ENCODE measurements at regions of chr16 and their contacts with region 1.

Region 1: DNA sequence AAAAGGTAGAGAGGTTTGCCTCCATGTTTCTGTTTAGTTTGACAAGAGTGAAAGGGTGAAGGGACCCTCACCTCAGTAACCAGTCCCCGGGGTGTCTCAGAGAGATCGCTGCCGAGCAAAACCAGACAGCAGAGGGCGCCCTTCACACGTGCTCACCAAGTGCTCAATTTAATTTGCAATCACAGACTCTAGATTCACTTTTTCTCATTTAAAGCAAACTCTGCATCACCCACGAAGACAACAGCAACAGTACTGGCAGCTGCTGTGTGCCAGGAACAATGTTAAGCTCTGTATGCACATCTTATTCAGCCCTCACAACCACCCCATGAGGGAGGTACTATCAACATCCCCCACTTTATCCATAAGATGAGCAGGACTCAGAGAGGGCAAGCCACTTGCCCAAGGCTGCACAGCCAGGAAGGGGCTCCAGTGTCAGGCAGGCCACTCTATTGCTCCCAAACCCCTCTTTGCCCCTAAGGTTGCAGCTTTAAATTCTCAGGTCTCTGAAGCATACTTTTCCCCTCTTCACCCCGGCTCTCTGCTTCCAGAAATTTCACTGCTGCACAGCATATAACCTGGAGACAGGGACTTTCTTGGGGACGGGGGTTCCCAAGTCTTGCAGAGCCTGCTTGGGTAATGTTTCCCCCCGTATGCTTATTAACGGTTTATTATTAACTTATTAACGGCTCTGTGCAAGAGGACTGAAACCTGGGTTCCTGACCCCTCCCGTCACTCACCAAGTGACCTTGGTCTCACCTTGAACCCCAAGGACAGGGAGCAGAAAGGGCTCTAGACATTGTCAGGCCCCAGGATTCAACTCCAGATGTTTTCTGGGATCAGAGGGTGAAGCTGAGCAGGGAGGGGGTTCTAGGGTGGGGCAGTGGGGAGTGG is 70.9 kb downstream of the CNGB1 start:
- DNase-seq: peak; percentile 63 to 77
- H3K4me3 ChIP-seq: no peak overlapping the region
- H3K27ac ChIP-seq: no peak overlapping the region
- H3K4me1 ChIP-seq: peaks cover 31% of the 10 kb centered on the region
- H3K27me3 ChIP-seq: no peaks in the 10 kb centered on the region
- CTCF ChIP-seq: peak; percentile 93

Region 2: DNA sequence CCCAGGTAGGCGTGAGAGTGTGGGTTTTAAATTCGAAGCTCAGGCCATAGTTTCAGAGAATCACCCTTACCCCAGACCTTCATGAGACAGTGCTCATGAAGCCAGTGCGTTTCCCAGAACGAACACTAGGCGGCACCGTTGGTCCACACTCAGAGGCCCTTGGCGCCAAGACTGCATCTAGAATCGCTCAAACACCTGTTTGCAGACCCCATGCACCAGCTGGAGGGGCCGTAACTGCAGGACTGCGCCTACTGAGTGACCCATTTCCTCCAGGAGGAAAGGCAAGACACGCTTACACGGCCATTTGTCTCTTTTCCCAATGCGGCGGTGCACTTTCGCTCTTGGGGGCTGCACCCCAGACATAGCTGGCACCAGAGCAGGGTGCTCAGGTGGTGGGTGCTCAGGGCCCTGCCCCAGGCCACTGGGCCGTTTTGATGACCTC is 323.6 kb before region 1 on chr16:
- CTCF ChIA-PET with region 1: no interaction called
- POLR2A ChIA-PET with region 1: no interaction called
- intact Hi-C with region 1: loop called (anchors 5 kb)
- DNase-seq: peak; percentile 52 to 69
- H3K4me3 ChIP-seq: no peak overlapping the region
- H3K27ac ChIP-seq: no peak overlapping the region
- H3K4me1 ChIP-seq: no peaks in the 10 kb centered on the region
- H3K27me3 ChIP-seq: no peaks in the 10 kb centered on the region
- CTCF ChIP-seq: peak; percentile 95

Region 3: GRCh38 chr16:57591086-57591869 is 308.7 kb before region 1 on chr16:
- CTCF ChIA-PET with region 1: no interaction called
- POLR2A ChIA-PET with region 1: no interaction called
- intact Hi-C with region 1: loop called (anchors 5 kb)
- DNase-seq: peak; percentile 79
- H3K4me3 ChIP-seq: no peak overlapping the region; the same call in 1 of the 2 replicates
- H3K27ac ChIP-seq: peak overlapping the region; percentile 80
- H3K4me1 ChIP-seq: peaks cover 16% of the 10 kb centered on the region
- H3K27me3 ChIP-seq: no peaks in the 10 kb centered on the region
- CTCF ChIP-seq: peak; percentile 97

Region 4: DNA sequence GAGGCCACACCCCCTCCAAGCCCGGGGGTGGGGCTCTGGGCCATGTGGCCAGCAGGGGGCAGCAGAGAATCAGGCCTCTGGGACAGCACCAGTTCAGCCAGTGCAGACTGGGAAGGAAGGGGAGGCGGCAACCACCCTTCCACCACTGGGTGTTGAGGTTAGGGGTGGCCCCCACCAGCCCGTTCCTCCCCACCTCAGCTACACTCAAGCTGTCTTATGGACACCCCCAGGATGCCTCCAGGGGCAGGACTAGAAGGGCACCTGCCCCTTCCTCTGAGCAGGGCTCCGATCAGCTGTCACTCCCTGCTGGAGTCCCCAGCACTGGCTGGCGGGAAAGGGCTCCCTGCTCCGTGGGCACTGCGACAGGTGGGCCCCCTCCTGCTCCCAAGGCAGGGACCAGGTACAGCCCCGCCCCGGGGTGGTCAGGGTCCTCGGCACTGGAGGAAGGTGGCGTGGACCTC is 142.7 kb before region 1 on chr16:
- CTCF ChIA-PET with region 1: no interaction called
- POLR2A ChIA-PET with region 1: no interaction called
- intact Hi-C with region 1: loop called (anchors 1 kb)
- DNase-seq: peak; percentile 59 to 91
- H3K4me3 ChIP-seq: no peak overlapping the region
- H3K27ac ChIP-seq: no peak overlapping the region
- H3K4me1 ChIP-seq: peaks cover 21% of the 10 kb centered on the region
- H3K27me3 ChIP-seq: no peaks in the 10 kb centered on the region
- CTCF ChIP-seq: peak; percentile 96

Region 5: GRCh38 chr16:57846078-57846697 is 53.8 kb before region 1 on chr16:
- CTCF ChIA-PET with region 1: no interaction called
- POLR2A ChIA-PET with region 1: no interaction called
- intact Hi-C with region 1: no loop called
- DNase-seq: peak; percentile 59 to 60
- H3K4me3 ChIP-seq: no peak overlapping the region
- H3K27ac ChIP-seq: no peak overlapping the region
- H3K4me1 ChIP-seq: peaks cover 10% of the 10 kb centered on the region; the same call in 1 of the 2 replicates
- H3K27me3 ChIP-seq: no peaks in the 10 kb centered on the region
- CTCF ChIP-seq: no peak

Region 6: GRCh38 chr16:57916735-57917451 is 16.9 kb after region 1 on chr16:
- CTCF ChIA-PET with region 1: no interaction called
- POLR2A ChIA-PET with region 1: no interaction called
- intact Hi-C with region 1: no loop called
- DNase-seq: peak; percentile 82 to 97
- H3K4me3 ChIP-seq: peak overlapping the region; percentile 3; the same call in 1 of the 2 replicates
- H3K27ac ChIP-seq: peak overlapping the region; percentile 33; the same call in 1 of the 2 replicates
- H3K4me1 ChIP-seq: peaks cover 27% of the 10 kb centered on the region
- H3K27me3 ChIP-seq: no peaks in the 10 kb centered on the region
- CTCF ChIP-seq: no peak

Region 7: DNA sequence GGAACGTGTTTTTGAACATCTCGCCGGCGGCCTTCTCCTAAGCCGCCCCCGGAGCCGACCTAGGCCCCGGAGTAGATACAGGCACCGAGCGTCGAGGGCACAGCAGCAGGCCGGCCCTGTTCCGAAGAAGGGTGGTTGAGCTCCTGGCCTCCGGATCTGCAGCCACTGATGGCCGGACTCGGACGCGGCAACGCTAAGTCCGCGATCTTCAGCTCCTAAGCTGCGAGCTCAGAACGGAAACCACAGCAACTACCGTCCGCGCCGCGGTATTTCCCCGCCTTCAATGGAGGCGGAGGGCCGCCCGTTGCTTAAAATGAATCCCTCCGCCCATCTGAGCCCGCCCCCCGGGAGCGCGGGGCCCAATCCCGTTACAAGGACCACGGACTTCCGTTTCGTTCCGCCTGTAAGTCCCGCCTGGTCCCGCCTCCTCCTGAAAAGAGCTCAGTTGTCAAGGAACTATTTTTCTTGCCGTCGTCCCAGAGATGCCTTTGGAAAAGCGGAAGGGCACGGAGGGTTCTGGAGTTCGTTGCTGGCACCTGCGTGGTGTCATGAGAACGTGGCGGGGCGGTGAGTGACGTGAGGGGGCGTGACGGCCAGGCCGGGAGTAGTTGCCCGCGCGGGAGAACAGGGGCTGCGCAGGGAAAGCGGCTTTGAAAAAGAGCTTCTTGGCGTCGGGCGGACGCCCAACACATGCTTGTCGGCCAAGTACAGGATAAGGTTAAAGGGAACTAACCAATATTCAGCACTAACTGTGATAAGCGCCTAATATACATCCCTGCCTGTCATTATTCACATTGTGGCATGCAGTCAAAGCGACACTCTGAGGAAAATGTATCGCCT is 229.3 kb after region 1 on chr16 and contains the start of gene CFAP20:
- CTCF ChIA-PET with region 1: no interaction called
- POLR2A ChIA-PET with region 1: no interaction called
- intact Hi-C with region 1: loop called (anchors 10 kb)
- DNase-seq: peak; percentile 98 to 99
- H3K4me3 ChIP-seq: peak within 1 kb of the TSS; percentile 88
- H3K27ac ChIP-seq: peak within 1 kb of the TSS; percentile 57
- H3K4me1 ChIP-seq: peaks cover 34% of the 10 kb centered on the region
- H3K27me3 ChIP-seq: no peaks in the 10 kb centered on the region
- CTCF ChIP-seq: no peak
- total RNA-seq, gene CFAP20: 35.9 and 49.6 TPM in 2 replicates